ENCODE measurements at regions of chr10 and their contacts with region 1.

Region 1: DNA sequence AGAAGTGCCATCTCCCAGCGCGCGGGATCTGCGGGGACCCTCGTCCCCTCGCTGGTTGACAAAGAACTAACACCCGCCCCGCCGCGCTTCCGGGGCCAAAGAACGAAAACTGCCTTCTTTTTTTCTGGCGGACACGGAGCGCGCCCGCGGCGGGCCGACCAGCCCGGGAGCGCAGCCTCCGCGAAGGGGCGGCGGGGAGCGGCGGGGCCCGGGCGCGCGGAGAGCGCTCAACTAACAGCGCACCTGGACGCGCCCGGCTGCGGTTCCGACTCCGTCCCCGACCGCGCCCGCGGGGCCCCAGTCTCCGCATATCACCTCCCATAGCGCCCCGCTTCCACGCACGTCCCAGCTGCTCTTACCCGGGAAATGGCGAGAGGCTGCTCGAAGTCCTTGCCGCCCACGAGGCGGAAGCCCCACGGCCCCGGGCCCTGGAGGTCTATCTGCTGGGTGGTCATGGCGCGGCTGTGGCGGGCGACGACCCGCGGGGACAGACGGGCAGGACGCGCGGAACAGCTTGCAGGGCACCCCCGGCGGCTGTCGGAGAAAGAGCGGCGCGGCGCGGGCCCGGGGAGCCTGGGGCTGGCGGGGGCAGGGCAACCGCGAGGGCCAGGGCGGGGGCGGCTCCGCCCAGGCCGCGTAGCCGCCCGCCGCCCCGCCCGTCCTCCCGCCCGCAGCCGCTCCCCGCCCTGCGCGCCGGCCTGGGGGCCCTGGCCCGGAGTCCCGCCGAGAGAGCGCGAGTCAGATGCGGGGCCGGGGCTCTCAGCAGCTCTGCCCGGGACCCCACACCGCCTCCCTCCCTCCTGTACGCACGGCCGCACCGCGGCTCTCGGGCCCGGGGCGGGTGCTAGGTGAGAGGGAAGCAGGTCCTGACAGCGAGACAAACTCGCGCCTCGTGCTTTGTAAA is at the start of gene PDLIM1:
- DNase-seq: peak; percentile 45
- ATAC-seq: peak; percentile 88
- H3K4me3 ChIP-seq: peak within 1 kb of the TSS; percentile 98
- H3K27ac ChIP-seq: peak within 1 kb of the TSS; percentile 94
- H3K4me1 ChIP-seq: peaks cover 15% of the 10 kb centered on the region
- H3K27me3 ChIP-seq: no peaks in the 10 kb centered on the region
- CTCF ChIP-seq: peak; percentile 30
- POLR2A ChIP-seq: peak; percentile 80
- RAD21 ChIP-seq: no peak
- total RNA-seq, gene PDLIM1: 27.5 and 30.1 TPM in 2 replicates

Region 2: DNA sequence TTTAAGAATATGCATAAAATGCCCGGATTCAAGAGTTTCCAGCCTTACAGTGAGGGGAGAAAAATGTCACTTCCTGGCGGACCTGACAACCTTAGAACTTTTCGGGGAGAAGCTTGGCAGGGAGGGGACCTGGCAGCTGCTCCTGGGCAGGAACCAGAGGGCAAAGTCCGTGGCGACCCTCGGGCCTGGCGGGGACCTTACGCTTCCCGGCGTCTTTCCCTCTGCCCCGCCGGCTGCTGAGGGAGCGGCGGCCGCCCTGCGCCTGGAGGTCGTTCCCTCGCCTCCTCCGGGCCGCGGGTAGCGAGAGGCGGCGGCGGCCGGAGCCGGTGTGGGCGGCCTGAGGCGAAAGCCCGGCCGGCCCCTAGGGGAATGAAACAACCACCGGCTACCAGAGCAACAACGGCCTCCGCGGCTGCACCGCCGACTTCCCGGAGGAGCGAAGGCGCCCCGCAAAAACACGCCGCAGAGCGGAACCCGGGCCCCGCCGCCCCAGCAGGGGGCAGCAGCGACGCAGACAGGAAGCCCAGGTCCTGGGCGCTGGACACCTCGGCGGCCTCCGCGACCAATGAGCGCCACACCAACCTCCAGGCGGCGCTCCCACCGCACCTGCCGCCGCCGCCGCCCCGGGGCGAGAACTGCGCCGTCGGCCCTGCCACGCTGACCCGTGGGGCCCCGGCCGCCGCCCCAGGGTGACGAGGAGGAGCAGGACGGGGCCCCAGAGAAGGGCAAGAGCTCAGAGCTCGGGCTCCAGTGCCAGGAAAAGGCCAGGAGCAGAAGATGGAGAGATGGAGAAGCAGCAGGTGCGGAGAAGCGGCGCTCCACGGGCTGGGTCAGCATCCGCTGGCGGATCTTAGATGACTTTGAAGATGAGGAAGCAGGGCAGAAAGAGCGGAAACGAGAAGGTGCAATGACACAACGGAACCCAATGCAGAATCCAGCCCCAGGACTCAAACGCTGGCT is 107.2 kb before region 1 on chr10:
- CTCF ChIA-PET with region 1: interaction called, 3 read pairs
- POLR2A ChIA-PET with region 1: no interaction called
- dilution Hi-C with region 1: no loop called
- in situ Hi-C with region 1: no loop called
- intact Hi-C with region 1: loop called (anchors 5 kb)
- DNase-seq: peak; percentile 71
- ATAC-seq: peak; percentile 98
- H3K4me3 ChIP-seq: peak overlapping the region; percentile 65
- H3K27ac ChIP-seq: peak overlapping the region; percentile 48; the same call in 1 of the 2 replicates
- H3K4me1 ChIP-seq: no peaks in the 10 kb centered on the region
- H3K27me3 ChIP-seq: peaks cover 2% of the 10 kb centered on the region
- CTCF ChIP-seq: peak; percentile 94
- POLR2A ChIP-seq: no peak
- RAD21 ChIP-seq: peak; percentile 76

Region 3: GRCh38 chr10:95279042-95279820 is 11.5 kb before region 1 on chr10:
- CTCF ChIA-PET with region 1: interaction called, 6 read pairs
- POLR2A ChIA-PET with region 1: interaction called, 8 read pairs
- dilution Hi-C with region 1: no loop called
- in situ Hi-C with region 1: no loop called
- intact Hi-C with region 1: loop called (anchors 1 kb)
- DNase-seq: peak; percentile 81
- ATAC-seq: peak; percentile 57
- H3K4me3 ChIP-seq: no peak overlapping the region
- H3K27ac ChIP-seq: peak overlapping the region; percentile 89; the same call in 1 of the 2 replicates
- H3K4me1 ChIP-seq: peaks cover 32% of the 10 kb centered on the region
- H3K27me3 ChIP-seq: no peaks in the 10 kb centered on the region
- CTCF ChIP-seq: no peak
- POLR2A ChIP-seq: no peak
- RAD21 ChIP-seq: no peak

Region 4: GRCh38 chr10:95333997-95334804 is 43.5 kb after region 1 on chr10:
- CTCF ChIA-PET with region 1: interaction called, 3 read pairs
- POLR2A ChIA-PET with region 1: interaction called, 4 read pairs
- dilution Hi-C with region 1: no loop called
- in situ Hi-C with region 1: no loop called
- intact Hi-C with region 1: loop called (anchors 2 kb)
- DNase-seq: peak; percentile 98
- ATAC-seq: peak; percentile 93
- H3K4me3 ChIP-seq: no peak overlapping the region
- H3K27ac ChIP-seq: peak overlapping the region; percentile 99
- H3K4me1 ChIP-seq: peaks cover 32% of the 10 kb centered on the region
- H3K27me3 ChIP-seq: no peaks in the 10 kb centered on the region
- CTCF ChIP-seq: no peak
- POLR2A ChIP-seq: 0 out of 2 replicates have a peak, but pooled peaks have one; percentile 13
- RAD21 ChIP-seq: no peak

Region 5: GRCh38 chr10:95391581-95392216 is 101.0 kb after region 1 on chr10:
- CTCF ChIA-PET with region 1: no interaction called
- POLR2A ChIA-PET with region 1: no interaction called
- dilution Hi-C with region 1: no loop called
- in situ Hi-C with region 1: no loop called
- intact Hi-C with region 1: no loop called
- DNase-seq: peak; percentile 46
- ATAC-seq: peak; percentile 96
- H3K4me3 ChIP-seq: no peak overlapping the region
- H3K27ac ChIP-seq: no peak overlapping the region
- H3K4me1 ChIP-seq: no peaks in the 10 kb centered on the region
- H3K27me3 ChIP-seq: no peaks in the 10 kb centered on the region
- CTCF ChIP-seq: no peak
- POLR2A ChIP-seq: no peak
- RAD21 ChIP-seq: no peak